ENCODE measurements at regions of chr2 and their contacts with region 1.

Region 1: GRCh38 chr2:153478334-153479261 is at the start of gene RPRM:
- DNase-seq: peak; percentile 62
- H3K4me3 ChIP-seq: peak within 1 kb of the TSS in 1 of 3 experiments; percentile 44
- H3K27ac ChIP-seq: no peak within 1 kb of the TSS
- H3K4me1 ChIP-seq: no peaks in the 10 kb centered on the region
- H3K27me3 ChIP-seq: peaks cover 23 to 32% of the 10 kb centered on the region in 2 experiments
- CTCF ChIP-seq: peak; percentile 81 to 92
- POLR2A ChIP-seq: no peak
- total RNA-seq, gene RPRM: not detected in 2 replicates

Region 2: DNA sequence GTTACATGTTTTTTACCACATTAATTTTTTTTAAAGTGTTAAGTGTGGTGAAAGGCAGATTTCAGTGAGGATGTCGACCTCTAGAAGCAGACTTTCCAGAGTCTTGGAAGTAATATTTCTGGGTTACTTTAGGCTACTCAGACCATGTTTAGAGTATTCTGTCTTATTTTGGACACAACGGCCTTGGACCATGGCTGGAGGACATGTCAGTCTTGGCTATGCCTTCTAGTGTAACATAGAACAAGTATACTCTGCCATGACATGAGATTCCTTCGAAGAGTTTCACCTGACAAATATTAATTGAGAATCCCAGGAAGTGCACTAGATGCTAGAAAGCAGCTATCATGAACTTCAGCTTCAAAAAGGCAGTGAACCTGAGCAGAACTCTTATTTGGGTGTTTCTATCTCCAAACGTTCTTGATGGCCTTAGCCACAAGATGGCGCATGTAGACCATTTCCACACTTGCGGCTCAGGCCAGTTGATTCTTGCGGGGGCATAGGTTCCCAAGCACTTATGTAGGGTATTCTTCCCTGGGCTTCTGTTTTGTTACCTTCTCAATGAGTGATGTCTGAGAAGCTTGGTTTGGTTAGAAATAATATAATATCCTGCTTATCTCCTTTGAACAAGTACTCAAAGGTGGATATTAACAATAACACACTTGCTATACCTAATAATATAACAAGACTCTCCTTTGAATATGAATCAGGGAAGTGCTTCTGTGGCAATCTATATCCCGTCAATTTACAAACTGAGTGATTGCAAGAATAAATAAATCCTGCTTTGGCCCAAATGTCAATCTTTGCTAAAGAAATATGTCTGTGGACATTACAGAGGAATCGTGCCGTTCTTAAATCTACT is 1441.8 kb before region 1 on chr2:
- CTCF ChIA-PET with region 1: interaction called, 3 read pairs
- POLR2A ChIA-PET with region 1: no interaction called
- dilution Hi-C with region 1: no loop called
- intact Hi-C with region 1: loop called (anchors 2 kb)
- DNase-seq: peak; percentile 75
- H3K4me3 ChIP-seq: no peak overlapping the region
- H3K27ac ChIP-seq: no peak overlapping the region
- H3K4me1 ChIP-seq: peaks cover 3% of the 10 kb centered on the region
- H3K27me3 ChIP-seq: peaks cover 4% of the 10 kb centered on the region in 2 experiments
- CTCF ChIP-seq: peak; percentile 75 to 76
- POLR2A ChIP-seq: no peak

Region 3: DNA sequence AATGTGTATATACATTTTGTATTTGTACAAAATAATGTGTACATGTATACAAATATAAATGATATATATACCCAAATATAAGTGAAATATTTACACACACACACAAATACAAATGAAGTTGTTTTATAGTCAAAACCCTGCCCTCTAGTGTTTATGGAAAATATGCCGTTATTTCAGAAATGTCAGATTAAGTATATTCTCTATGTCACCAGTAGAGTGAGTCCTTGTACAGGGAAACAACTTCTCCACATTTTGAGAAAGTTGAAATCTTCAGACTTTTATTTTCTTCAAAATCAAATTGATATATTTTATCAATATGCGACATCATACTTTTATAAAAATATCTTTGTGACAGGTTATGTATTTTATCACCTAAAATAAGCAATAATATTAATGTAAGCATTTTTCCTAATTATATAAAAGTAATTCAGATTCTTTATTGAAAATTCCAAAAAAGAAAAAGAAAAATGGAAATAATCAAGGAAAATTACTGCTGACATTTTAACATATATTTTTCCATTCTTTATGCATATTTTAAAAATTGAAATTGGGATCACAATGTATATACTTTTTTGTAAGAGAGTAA is 737.8 kb before region 1 on chr2:
- CTCF ChIA-PET with region 1: interaction called, 8 read pairs
- POLR2A ChIA-PET with region 1: no interaction called
- dilution Hi-C with region 1: no loop called
- intact Hi-C with region 1: loop called (anchors 1 kb)
- DNase-seq: peak; percentile 78
- H3K4me3 ChIP-seq: no peak overlapping the region
- H3K27ac ChIP-seq: no peak overlapping the region
- H3K4me1 ChIP-seq: peaks cover 5% of the 10 kb centered on the region
- H3K27me3 ChIP-seq: no peaks in the 10 kb centered on the region
- CTCF ChIP-seq: peak; percentile 52
- POLR2A ChIP-seq: no peak

Region 4: DNA sequence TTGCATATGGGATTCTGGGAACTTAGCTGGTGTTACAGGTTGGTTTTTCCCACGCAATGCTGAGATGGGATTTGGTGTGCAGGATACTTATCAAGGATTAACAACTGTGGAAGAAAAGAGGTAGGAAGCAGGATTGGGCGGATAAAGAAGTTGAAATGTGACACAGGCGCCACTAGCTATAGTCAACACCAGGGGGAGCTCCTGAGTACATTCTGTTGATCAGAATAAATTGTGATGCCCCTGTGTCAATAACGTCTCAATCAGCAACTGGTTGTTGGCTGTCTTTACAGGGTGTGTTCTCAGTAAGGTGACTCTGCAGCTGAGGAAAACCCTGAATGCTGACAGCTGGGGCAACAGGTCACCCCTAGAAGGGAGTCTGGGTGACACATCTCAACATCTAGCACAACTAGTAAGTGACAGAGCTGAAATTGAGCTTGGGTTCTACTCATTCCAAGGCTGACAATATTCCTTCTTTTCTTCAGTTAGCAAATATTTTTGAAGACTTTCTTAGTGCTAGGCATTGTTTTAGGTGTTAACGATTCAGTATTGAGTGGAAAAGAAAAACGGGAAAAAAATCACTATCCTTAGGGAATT is 617.2 kb before region 1 on chr2:
- CTCF ChIA-PET with region 1: no interaction called
- POLR2A ChIA-PET with region 1: no interaction called
- dilution Hi-C with region 1: no loop called
- intact Hi-C with region 1: loop called (anchors 1 kb)
- DNase-seq: peak; percentile 30
- H3K4me3 ChIP-seq: no peak overlapping the region
- H3K27ac ChIP-seq: no peak overlapping the region
- H3K4me1 ChIP-seq: no peaks in the 10 kb centered on the region
- H3K27me3 ChIP-seq: no peaks in the 10 kb centered on the region
- CTCF ChIP-seq: peak; percentile 55 to 72
- POLR2A ChIP-seq: no peak

Region 5: GRCh38 chr2:152925547-152926327 is 552.9 kb before region 1 on chr2:
- CTCF ChIA-PET with region 1: no interaction called
- POLR2A ChIA-PET with region 1: no interaction called
- dilution Hi-C with region 1: no loop called
- intact Hi-C with region 1: loop called (anchors 1 kb)
- DNase-seq: peak; percentile 6
- H3K4me3 ChIP-seq: no peak overlapping the region
- H3K27ac ChIP-seq: no peak overlapping the region
- H3K4me1 ChIP-seq: no peaks in the 10 kb centered on the region
- H3K27me3 ChIP-seq: no peaks in the 10 kb centered on the region
- CTCF ChIP-seq: peak; percentile 51 to 53
- POLR2A ChIP-seq: no peak

Region 6: GRCh38 chr2:153388246-153388645 is 90.4 kb before region 1 on chr2:
- CTCF ChIA-PET with region 1: no interaction called
- POLR2A ChIA-PET with region 1: no interaction called
- dilution Hi-C with region 1: no loop called
- intact Hi-C with region 1: no loop called
- DNase-seq: no peak
- H3K4me3 ChIP-seq: no peak overlapping the region
- H3K27ac ChIP-seq: no peak overlapping the region
- H3K4me1 ChIP-seq: no peaks in the 10 kb centered on the region
- H3K27me3 ChIP-seq: no peaks in the 10 kb centered on the region
- CTCF ChIP-seq: no peak
- POLR2A ChIP-seq: no peak

Region 7: GRCh38 chr2:154375579-154375931 is 897.0 kb after region 1 on chr2:
- CTCF ChIA-PET with region 1: no interaction called
- POLR2A ChIA-PET with region 1: no interaction called
- dilution Hi-C with region 1: no loop called
- intact Hi-C with region 1: loop called (anchors 2 kb)
- DNase-seq: peak; percentile 46
- H3K4me3 ChIP-seq: no peak overlapping the region
- H3K27ac ChIP-seq: no peak overlapping the region
- H3K4me1 ChIP-seq: no peaks in the 10 kb centered on the region
- H3K27me3 ChIP-seq: no peaks in the 10 kb centered on the region
- CTCF ChIP-seq: peak in 1 of 2 donors; percentile 16
- POLR2A ChIP-seq: no peak

Measured in endothelial cell of umbilical vein (primary cell).